CD14-positive monocyte (primary cell): ENCODE measurements at regions of chr18 and their contacts with region 1.

Region 1: DNA sequence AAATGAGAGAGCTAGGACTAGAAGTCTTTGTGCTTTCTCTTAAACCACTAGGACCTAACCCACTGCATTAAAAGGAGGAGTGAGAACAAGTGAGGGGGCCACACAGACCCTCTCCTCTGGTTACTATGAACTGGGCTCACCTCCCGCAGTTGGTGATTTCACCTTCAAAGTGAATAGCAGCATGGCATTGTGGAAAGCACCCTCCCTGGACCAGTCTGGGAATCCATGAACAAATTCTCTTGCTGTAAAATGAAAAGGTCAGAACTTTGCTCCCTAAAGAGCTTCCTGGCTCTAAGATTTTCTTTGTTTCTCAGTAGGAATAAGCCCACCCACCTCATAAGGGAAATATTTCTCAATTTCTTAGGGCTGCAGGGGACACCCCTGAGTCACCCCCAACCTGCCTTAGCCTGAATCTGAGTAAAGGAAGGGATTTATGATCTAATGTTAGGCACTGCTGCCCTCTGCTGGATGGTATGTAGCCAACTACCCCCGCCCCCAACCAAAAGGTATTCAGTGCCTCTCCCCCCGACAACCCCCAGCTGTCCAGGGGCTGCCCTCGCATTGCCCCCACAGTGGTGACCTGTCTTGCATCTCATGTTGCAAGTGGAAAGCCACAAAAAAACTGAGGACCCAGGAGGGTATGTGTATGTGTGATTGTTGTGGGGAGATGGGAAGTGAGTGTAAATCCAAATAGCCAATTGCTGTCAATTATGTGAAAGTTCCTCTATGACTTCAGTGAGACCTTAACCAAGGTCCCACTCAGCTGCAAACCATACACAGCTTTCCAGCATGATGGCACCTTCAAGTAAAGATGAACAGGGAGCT is 230.9 kb upstream of the SLC14A2 start:
- DNase-seq: peak; percentile 36 to 66 (median 45)
- H3K4me3 ChIP-seq: no peak overlapping the region
- H3K4me3 Mint-ChIP-seq: peak overlapping the region in 1 of 2 donors; percentile 33
- H3K27ac ChIP-seq: no peak overlapping the region
- H3K27ac Mint-ChIP-seq: no peak overlapping the region
- H3K4me1 ChIP-seq: no peaks in the 10 kb centered on the region
- H3K4me1 Mint-ChIP-seq: peaks cover 3% of the 10 kb centered on the region
- H3K27me3 ChIP-seq: no peaks in the 10 kb centered on the region
- H3K27me3 Mint-ChIP-seq: peaks cover 5 to 9% (median 8%) of the 10 kb centered on the region in 3 donors
- CTCF ChIP-seq: peak; percentile 85

Region 2: GRCh38 chr18:43620936-43621335 is 1763.4 kb before region 1 on chr18:
- intact Hi-C with region 1: loop called (anchors 5 to 10 kb)
- DNase-seq: peak in 1 of 3 donors; percentile 1
- H3K4me3 ChIP-seq: no peak overlapping the region
- H3K4me3 Mint-ChIP-seq: no peak overlapping the region
- H3K27ac ChIP-seq: no peak overlapping the region
- H3K27ac Mint-ChIP-seq: no peak overlapping the region
- H3K4me1 ChIP-seq: no peaks in the 10 kb centered on the region
- H3K4me1 Mint-ChIP-seq: no peaks in the 10 kb centered on the region
- H3K27me3 ChIP-seq: no peaks in the 10 kb centered on the region
- H3K27me3 Mint-ChIP-seq: peaks cover 0 to 6% (median 0%) of the 10 kb centered on the region in 3 donors
- CTCF ChIP-seq: peak; percentile 60